HCT116 (cell line): ENCODE measurements at regions of chr19 and their contacts with region 1.

Region 1: DNA sequence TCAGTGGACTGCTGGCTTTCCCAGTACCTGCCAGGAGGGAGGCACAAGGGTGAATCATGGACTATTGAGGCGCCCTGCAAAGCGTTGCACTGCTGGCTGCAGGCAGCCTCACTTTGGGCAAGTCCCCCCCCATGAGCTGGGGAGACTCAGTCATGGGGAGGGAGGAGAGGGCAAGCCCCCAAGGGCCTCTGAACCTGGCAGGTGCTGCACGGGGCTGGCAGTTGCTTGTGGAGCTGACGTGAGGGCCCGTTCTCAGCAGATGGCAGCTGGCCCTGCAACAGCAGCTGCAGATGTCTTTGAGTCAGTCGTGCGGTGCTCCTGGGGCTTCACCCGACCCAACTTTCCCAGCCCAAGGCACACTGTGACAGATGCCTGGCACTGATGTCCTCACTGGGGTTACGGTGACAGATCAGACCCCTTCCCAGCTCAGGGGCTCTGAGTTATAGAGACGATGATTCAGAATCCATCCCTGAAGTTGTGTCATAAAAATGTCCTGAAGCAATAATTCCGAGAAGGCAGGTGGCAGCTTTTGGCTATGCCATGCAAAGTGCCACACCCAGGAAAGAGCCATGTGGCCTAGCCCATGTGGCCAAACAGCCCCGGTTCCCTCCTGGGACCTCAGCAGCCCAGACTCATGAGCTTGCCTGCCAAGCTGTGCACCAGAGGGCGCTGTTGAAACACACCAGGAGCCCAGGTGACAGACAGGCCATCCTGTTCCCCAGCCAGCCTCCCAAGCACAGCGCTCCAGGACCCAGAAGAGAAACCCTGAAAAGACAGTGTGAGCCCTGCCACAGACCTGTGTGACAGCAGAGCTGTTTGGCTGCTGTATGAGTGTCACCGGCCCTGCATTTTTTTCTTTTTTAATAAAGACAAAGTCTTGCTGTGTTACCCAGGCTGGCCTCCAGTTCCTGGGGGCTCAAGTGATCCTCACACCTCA is 53.6 kb upstream of the LDLR start:
- DNase-seq: peak; percentile 73
- ATAC-seq: peak; percentile 99
- H3K4me3 ChIP-seq: no peak overlapping the region
- H3K27ac ChIP-seq: peak overlapping the region; percentile 31; the same call in 1 of the 2 replicates
- H3K4me1 ChIP-seq: peaks cover 0 to 8% of the 10 kb centered on the region in 2 experiments; a peak in 1 of 4 replicates
- H3K27me3 ChIP-seq: no peaks in the 10 kb centered on the region
- CTCF ChIP-seq: peak; percentile 88 to 93 (median 89)
- POLR2A ChIP-seq: no peak
- RAD21 ChIP-seq: peak; percentile 95

Region 2: DNA sequence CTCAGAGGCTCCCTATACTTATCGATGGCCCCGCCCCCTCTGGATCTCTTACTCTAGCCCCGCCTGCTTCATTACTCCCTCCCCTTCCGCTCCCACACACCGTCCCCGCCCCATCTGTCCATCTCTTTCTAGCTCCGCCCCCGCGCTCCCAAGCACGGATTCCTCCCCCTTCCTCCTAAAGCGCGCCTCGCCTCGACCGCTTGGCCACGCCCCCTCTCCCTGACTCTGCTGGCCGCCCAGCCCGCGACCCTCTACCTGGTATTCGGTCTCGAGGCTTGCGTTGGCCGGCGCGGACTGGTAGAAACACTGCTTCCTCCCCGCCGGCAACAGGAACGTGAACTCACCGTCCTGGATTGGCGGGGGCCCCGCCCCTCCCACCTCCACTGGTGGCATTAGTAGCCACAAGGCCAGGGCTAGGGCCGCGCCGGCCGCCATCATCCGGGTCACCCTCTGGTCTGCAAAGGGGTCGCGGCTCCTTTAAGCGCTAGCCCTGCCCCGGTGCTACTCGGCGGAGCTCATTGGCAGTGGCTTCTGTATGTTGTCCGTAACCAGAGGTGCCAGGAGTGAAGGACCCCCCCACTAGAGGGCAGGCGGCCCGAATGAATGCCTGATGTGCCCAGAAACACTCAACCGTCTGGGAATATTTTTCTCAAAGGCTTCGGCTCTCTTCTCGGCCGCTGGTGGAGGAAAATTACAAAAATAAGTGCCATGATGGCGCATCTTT is 199.8 kb before region 1 on chr19 and contains the start of gene TMED1:
- CTCF ChIA-PET with region 1: no interaction called
- POLR2A ChIA-PET with region 1: no interaction called
- RAD21 ChIA-PET with region 1: no interaction called
- intact Hi-C with region 1: no loop called
- DNase-seq: peak; percentile 99
- ATAC-seq: peak; percentile 87
- H3K4me3 ChIP-seq: peak within 1 kb of the TSS; percentile 72 to 83
- H3K27ac ChIP-seq: peak within 1 kb of the TSS; percentile 94
- H3K4me1 ChIP-seq: peaks cover 10 to 22% of the 10 kb centered on the region in 2 experiments; a peak in 3 of 4 replicates
- H3K27me3 ChIP-seq: no peaks in the 10 kb centered on the region
- CTCF ChIP-seq: peak in 2 of 3 experiments; percentile 25 to 32; a peak in 5 of 6 replicates
- POLR2A ChIP-seq: no peak
- RAD21 ChIP-seq: peak; percentile 34
- total RNA-seq, gene TMED1: 26.3 TPM

Region 3: DNA sequence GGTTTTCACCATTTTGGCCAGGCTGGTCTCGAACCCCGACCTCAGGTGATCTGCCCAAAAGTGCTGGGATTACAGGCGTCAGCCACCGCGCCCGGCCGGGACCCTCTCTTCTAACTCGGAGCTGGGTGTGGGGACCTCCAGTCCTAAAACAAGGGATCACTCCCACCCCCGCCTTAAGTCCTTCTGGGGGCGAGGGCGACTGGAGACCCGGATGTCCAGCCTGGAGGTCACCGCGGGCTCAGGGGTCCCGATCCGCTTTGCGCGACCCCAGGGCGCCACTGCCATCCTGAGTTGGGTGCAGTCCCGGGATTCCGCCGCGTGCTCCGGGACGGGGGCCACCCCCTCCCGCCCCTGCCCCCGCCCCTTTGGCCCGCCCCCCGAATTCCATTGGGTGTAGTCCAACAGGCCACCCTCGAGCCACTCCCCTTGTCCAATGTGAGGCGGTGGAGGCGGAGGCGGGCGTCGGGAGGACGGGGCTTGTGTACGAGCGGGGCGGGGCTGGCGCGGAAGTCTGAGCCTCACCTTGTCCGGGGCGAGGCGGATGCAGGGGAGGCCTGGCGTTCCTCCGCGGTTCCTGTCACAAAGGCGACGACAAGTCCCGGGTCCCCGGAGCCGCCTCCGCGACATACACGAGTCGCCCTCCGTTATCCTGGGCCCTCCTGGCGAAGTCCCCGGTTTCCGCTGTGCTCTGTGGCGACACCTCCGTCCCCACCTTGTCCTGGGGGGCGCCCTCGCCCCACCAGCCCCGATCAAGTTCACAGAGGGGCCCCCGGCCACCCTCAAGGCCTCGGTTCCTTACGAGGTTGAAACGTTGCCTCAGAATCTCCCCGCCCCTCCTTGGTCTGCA is 54.6 kb after region 1 on chr19:
- CTCF ChIA-PET with region 1: interaction called, 11 read pairs
- POLR2A ChIA-PET with region 1: interaction called, 3 read pairs
- RAD21 ChIA-PET with region 1: interaction called, 3 read pairs
- intact Hi-C with region 1: loop called (anchors 2 kb)
- DNase-seq: peak; percentile 86
- ATAC-seq: peak; percentile 77
- H3K4me3 ChIP-seq: peak overlapping the region; percentile 92 to 97
- H3K27ac ChIP-seq: peak overlapping the region; percentile 91
- H3K4me1 ChIP-seq: peaks cover 77 to 86% of the 10 kb centered on the region in 2 experiments
- H3K27me3 ChIP-seq: no peaks in the 10 kb centered on the region
- CTCF ChIP-seq: no peak
- POLR2A ChIP-seq: peak; percentile 49
- RAD21 ChIP-seq: no peak

Region 4: DNA sequence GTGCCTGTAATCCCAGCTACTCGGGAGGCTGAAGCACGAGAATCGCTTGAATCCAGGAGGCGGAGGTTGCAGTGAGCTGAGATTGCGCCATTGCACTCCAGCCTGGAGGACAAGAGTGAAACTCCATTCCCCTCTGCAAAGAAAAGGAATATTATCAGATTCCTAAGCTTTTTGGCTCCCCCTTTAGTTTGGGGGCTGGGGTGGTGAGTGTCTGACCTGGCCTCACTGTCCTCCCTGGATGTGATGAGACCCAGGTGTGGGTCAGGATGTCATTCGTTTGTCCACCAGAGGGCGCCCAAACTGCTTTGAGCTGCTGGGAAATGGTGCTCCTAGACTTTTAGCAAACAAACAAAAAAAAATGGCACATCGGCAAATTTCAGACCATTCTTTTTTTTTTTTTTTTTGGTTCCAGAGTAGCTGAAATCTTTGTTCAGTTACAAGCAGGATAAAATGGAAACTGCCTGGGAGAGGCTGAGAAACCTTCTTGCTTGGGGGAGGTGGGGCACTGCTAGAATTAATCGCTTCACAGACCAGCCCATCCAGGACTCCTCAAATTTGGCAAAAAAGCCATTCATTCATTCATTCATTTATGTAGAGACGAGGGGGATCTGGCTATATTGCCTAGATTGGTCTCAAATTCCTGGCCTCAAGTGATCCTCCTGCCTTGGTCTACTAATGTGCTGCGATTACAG is 90.4 kb after region 1 on chr19:
- CTCF ChIA-PET with region 1: interaction called, 8 read pairs
- POLR2A ChIA-PET with region 1: no interaction called
- RAD21 ChIA-PET with region 1: interaction called in 1 of 2 experiments, 3 read pairs
- intact Hi-C with region 1: loop called (anchors 1 kb)
- DNase-seq: peak; percentile 39
- ATAC-seq: peak; percentile 75
- H3K4me3 ChIP-seq: no peak overlapping the region
- H3K27ac ChIP-seq: no peak overlapping the region
- H3K4me1 ChIP-seq: peaks cover 0 to 3% of the 10 kb centered on the region in 2 experiments; a peak in 1 of 4 replicates
- H3K27me3 ChIP-seq: no peaks in the 10 kb centered on the region
- CTCF ChIP-seq: peak; percentile 64 to 78 (median 77); a peak in 5 of 6 replicates
- POLR2A ChIP-seq: no peak
- RAD21 ChIP-seq: peak; percentile 56